CD8-positive, alpha-beta memory T cell (primary cell): ENCODE measurements at regions of chr19 and their contacts with region 1.

Region 1: DNA sequence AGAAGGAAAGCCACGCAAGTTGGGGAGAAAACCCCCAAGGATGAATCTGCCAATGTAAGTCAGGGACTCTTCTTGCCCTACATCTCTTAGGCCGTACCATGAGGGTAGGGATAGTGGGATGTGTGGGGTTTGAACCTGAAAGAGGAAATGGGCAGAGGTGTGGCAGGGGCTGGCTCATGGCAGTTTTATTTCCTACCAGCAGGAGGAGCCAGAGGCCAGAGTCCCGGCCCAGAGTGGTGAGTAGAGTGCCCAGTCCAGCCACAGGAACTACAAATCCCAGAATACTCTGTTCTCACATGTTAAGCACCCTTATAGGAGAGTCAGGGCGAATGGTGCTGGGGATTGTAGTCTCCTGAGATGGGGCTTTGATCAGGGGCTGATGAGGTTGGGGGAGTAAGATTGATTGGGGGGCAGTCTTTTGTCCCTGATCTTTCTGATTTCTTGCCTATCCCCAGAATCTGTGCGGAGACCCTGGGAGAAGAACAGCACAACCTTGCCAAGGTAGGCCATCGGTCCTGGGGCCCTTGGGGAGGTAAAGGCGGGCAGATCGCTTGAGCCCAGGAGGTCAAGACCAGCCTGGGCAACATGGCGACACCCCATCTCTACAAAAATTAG is 16.5 kb downstream of the VASP start:
- DNase-seq: peak; percentile 50 to 81 (median 77)
- H3K4me3 ChIP-seq: no peak overlapping the region
- H3K4me3 Mint-ChIP-seq: peak overlapping the region in 1 of 7 donors; percentile 10
- H3K27ac ChIP-seq: no peak overlapping the region
- H3K27ac Mint-ChIP-seq: peak overlapping the region; percentile 6 to 87 (median 60)
- H3K4me1 ChIP-seq: peaks cover 4% of the 10 kb centered on the region
- H3K4me1 Mint-ChIP-seq: peaks cover 15 to 20% (median 17%) of the 10 kb centered on the region in 3 donors
- H3K27me3 ChIP-seq: no peaks in the 10 kb centered on the region
- H3K27me3 Mint-ChIP-seq: no peaks in the 10 kb centered on the region

Region 2: DNA sequence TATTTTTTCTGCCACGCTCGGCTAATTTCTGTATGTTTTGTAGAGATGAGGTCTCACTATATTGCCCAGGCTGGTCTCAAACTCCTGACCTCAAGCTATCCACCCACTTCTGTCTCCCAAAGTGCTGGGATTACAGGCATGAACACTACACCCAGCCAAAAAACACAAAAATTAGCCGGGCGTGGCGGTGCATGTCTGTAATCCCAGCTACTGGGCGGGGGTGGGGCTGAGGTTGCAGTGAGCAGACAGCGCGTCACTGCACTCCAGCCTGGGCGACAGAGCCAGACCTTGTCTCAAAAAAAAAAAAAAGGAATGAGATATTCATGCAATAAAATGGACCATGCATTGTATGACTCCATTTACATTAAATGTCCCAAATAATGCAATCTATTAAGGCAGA is 15.7 kb after region 1 on chr19:
- CTCF ChIA-PET with region 1: no interaction called
- POLR2A ChIA-PET with region 1: no interaction called
- DNase-seq: no peak
- H3K4me3 ChIP-seq: no peak overlapping the region
- H3K4me3 Mint-ChIP-seq: no peak overlapping the region
- H3K27ac ChIP-seq: no peak overlapping the region
- H3K27ac Mint-ChIP-seq: no peak overlapping the region
- H3K4me1 ChIP-seq: no peaks in the 10 kb centered on the region
- H3K4me1 Mint-ChIP-seq: peaks cover 0 to 2% (median 0%) of the 10 kb centered on the region in 3 donors
- H3K27me3 ChIP-seq: no peaks in the 10 kb centered on the region
- H3K27me3 Mint-ChIP-seq: no peaks in the 10 kb centered on the region

Region 3: GRCh38 chr19:45670670-45671453 is 147.1 kb after region 1 on chr19:
- CTCF ChIA-PET with region 1: no interaction called
- POLR2A ChIA-PET with region 1: interaction called, 13 read pairs
- DNase-seq: peak; percentile 24 to 61 (median 41)
- H3K4me3 ChIP-seq: no peak overlapping the region
- H3K4me3 Mint-ChIP-seq: peak overlapping the region in 6 of 7 donors; percentile 19 to 65 (median 32)
- H3K27ac ChIP-seq: peak overlapping the region; percentile 24
- H3K27ac Mint-ChIP-seq: peak overlapping the region in 1 of 8 donors; percentile 17
- H3K4me1 ChIP-seq: peaks cover 20% of the 10 kb centered on the region
- H3K4me1 Mint-ChIP-seq: peaks cover 24 to 39% (median 27%) of the 10 kb centered on the region in 3 donors
- H3K27me3 ChIP-seq: no peaks in the 10 kb centered on the region
- H3K27me3 Mint-ChIP-seq: peaks cover 0 to 12% of the 10 kb centered on the region in 2 donors